Heart right ventricle (tissue), 16 donors: ENCODE measurements at regions of chr1 and their contacts with region 1.

Region 1: DNA sequence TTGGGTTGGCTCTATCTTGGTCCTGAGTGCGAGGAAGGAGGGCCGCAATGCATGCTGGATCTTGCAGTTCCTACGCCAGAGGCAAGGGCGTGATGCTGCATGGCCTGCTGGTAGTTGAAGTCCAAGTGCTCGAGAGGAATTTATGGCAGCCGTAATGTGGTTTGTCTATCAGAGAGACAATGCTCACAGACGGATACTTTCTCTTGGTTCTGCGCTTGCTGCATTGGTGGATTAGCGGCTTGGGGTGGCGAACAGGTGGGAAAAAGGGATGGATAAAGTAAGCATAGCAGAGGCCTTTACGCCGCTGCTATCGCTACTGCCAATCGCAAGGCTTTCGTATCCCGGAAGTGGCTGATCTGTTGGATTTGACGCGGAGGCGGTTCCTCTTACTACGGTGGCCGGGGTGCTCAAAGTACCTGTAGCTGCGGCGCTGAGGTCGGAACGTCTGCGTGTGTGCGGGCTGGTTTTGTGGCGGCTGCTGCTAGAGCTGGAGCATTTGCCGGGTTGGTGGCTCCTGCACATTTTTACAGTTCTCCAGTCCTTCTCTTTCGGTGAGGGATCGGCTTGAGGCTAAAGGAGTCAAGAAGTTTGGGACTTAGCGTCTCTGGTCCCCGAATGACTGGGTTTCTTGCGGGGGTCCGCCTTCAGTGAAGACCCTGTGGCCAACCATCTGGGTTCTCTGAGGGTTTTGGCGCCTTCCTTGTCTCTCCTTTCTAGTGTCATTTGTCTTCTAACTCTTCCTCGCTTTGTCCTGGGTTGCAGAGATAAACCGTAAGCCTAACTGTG is at the start of gene ATG4C:
- DNase-seq: peak; percentile 89 to 97
- ATAC-seq: peak; percentile 99 to 100 (median 99)
- H3K4me3 ChIP-seq: peak within 1 kb of the TSS; percentile 50 to 95 (median 78)
- H3K27ac ChIP-seq: peak within 1 kb of the TSS; percentile 75 to 96 (median 92)
- H3K4me1 ChIP-seq: peaks cover 3 to 34% (median 21%) of the 10 kb centered on the region in 9 donors
- H3K27me3 ChIP-seq: no peaks in the 10 kb centered on the region
- CTCF ChIP-seq: no peak
- total RNA-seq, gene ATG4C: 7.2 to 17.9 (median 9.3) TPM

Region 2: DNA sequence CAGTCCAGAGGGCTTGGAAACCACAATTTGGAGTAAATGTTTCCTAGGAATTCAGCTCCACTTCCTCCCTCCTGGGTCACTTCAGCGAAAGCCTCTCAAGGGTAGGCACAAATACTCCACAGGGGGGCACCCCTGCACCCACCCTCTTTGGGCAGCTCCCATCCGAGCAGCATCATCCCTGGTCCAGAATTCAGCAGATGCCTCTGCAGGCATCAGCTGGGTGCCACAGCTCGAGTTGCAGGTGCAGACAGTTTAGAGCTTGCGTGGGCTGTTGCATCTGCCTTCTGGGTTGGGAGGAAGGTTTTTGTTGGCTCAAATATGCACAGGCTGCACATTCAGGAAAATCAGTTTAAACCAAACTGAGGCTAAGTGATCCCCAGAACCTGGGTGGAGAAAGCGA is 489.7 kb before region 1 on chr1:
- intact Hi-C with region 1: no loop called
- DNase-seq: no peak
- ATAC-seq: peak in 2 of 8 donors; percentile 25 to 35
- H3K4me3 ChIP-seq: no peak overlapping the region
- H3K27ac ChIP-seq: no peak overlapping the region
- H3K4me1 ChIP-seq: peaks cover 4 to 33% (median 14%) of the 10 kb centered on the region in 9 donors
- H3K27me3 ChIP-seq: peaks cover 0 to 15% (median 0%) of the 10 kb centered on the region in 7 donors
- CTCF ChIP-seq: peak in 7 of 9 donors; percentile 14 to 34 (median 25)

Region 3: GRCh38 chr1:62436466-62437256 is 347.3 kb before region 1 on chr1 and contains the start of gene USP1:
- intact Hi-C with region 1: loop called in 1 of 10 experiments (anchors 5 kb)
- DNase-seq: peak; percentile 94 to 99
- ATAC-seq: peak; percentile 88 to 96 (median 92)
- H3K4me3 ChIP-seq: peak within 1 kb of the TSS; percentile 71 to 96 (median 86)
- H3K27ac ChIP-seq: peak within 1 kb of the TSS; percentile 89 to 99 (median 98)
- H3K4me1 ChIP-seq: peaks cover 4 to 42% (median 28%) of the 10 kb centered on the region in 9 donors
- H3K27me3 ChIP-seq: no peaks in the 10 kb centered on the region
- CTCF ChIP-seq: peak in 1 of 9 donors; percentile 9
- total RNA-seq, gene USP1: 11.0 to 16.4 (median 14.3) TPM